CD4-positive, alpha-beta T cell (primary cell): ENCODE measurements at regions of chr1 and their contacts with region 1.

Region 1: GRCh38 chr1:23484253-23485001 is 448 bp upstream of the ASAP3 start:
- DNase-seq: peak; percentile 85 to 96 (median 92)
- ATAC-seq: peak; percentile 93
- H3K4me3 ChIP-seq: peak overlapping the region; percentile 55
- H3K4me3 Mint-ChIP-seq: peak overlapping the region; percentile 92
- H3K27ac ChIP-seq: no peak overlapping the region
- H3K27ac Mint-ChIP-seq: peak overlapping the region; percentile 55
- H3K4me1 ChIP-seq: peaks cover 17% of the 10 kb centered on the region
- H3K4me1 Mint-ChIP-seq: peaks cover 19% of the 10 kb centered on the region
- H3K27me3 ChIP-seq: peaks cover 17 to 24% of the 10 kb centered on the region in 2 experiments
- H3K27me3 Mint-ChIP-seq: peaks cover 28% of the 10 kb centered on the region
- CTCF ChIP-seq: no peak

Region 2: GRCh38 chr1:23530747-23531561 is 46.5 kb after region 1 on chr1 and contains the start of gene E2F2:
- CTCF ChIA-PET with region 1: interaction called, 7 read pairs
- POLR2A ChIA-PET with region 1: no interaction called
- intact Hi-C with region 1: loop called in 1 of 2 experiments (anchors 2 kb)
- DNase-seq: peak; percentile 66 to 92 (median 80)
- ATAC-seq: peak; percentile 79
- H3K4me3 ChIP-seq: peak within 1 kb of the TSS; percentile 44
- H3K4me3 Mint-ChIP-seq: peak within 1 kb of the TSS; percentile 91
- H3K27ac ChIP-seq: peak within 1 kb of the TSS in 1 of 2 donors; percentile 58
- H3K27ac Mint-ChIP-seq: peak within 1 kb of the TSS; percentile 84
- H3K4me1 ChIP-seq: peaks cover 78% of the 10 kb centered on the region
- H3K4me1 Mint-ChIP-seq: peaks cover 80% of the 10 kb centered on the region
- H3K27me3 ChIP-seq: no peaks in the 10 kb centered on the region
- H3K27me3 Mint-ChIP-seq: no peaks in the 10 kb centered on the region
- CTCF ChIP-seq: no peak
- total RNA-seq, gene E2F2: 0.50 to 0.69 TPM